ENCODE measurements at regions of chr4 and their contacts with region 1.

Region 1: DNA sequence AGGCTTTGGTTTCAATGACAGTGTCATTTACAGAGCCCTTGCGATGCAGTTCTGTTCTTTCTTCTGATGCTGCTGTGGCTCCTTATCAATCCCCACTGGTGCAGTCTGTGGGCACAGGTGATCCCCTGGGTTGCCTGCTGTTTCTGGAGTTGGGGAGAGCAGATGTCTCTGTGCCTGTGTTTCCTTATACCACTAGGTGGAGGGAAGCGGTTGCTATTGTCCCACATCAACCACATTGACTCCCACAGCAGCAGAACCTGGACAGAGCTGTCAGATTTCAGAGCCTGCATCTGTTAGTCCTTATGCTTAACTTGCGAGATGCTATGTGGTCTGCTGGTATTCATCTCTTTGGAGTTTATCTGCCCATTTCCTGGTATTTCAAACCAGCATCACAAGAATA is 57.7 kb downstream of the NEIL3 start:
- DNase-seq: peak; percentile 12
- H3K4me3 ChIP-seq: no peak overlapping the region
- H3K27ac ChIP-seq: no peak overlapping the region
- H3K4me1 ChIP-seq: no peaks in the 10 kb centered on the region
- H3K27me3 ChIP-seq: no peaks in the 10 kb centered on the region
- CTCF ChIP-seq: peak; percentile 10 to 42

Region 2: GRCh38 chr4:177441803-177442622 is 74.7 kb after region 1 on chr4 and contains the start of gene AGA:
- CTCF ChIA-PET with region 1: no interaction called
- dilution Hi-C with region 1: no loop called
- in situ Hi-C with region 1: no loop called
- intact Hi-C with region 1: no loop called
- DNase-seq: peak; percentile 94
- H3K4me3 ChIP-seq: peak within 1 kb of the TSS; percentile 73 to 78 (median 77)
- H3K27ac ChIP-seq: peak within 1 kb of the TSS; percentile 93
- H3K4me1 ChIP-seq: peaks cover 16% of the 10 kb centered on the region
- H3K27me3 ChIP-seq: no peaks in the 10 kb centered on the region
- CTCF ChIP-seq: no peak
- total RNA-seq, gene AGA: 12.7 to 49.3 TPM

Region 3: DNA sequence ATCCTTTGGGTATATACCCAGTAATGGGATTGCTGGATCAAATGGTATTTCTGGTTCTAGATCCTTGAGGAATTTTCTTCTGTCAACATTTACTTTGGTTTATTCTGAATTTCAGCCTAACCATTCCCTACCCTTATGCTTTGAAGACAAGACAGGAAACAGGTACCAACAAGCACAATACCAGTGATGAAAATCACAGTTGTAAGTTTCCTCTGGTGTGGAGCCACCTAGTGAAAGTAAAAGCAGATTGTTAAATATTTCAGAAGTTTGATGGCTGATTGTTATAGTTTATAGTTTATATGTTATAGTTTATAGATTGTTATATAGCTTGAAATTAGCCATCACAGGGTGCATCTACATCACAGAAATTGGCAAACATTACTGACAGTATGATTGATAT is 179.4 kb after region 1 on chr4:
- CTCF ChIA-PET with region 1: no interaction called
- dilution Hi-C with region 1: no loop called
- in situ Hi-C with region 1: no loop called
- intact Hi-C with region 1: loop called (anchors 1 kb)
- DNase-seq: peak; percentile 24
- H3K4me3 ChIP-seq: no peak overlapping the region
- H3K27ac ChIP-seq: no peak overlapping the region
- H3K4me1 ChIP-seq: no peaks in the 10 kb centered on the region
- H3K27me3 ChIP-seq: no peaks in the 10 kb centered on the region
- CTCF ChIP-seq: peak; percentile 17 to 53